ENCODE measurements at regions of chr3 and their contacts with region 1.

Region 1: DNA sequence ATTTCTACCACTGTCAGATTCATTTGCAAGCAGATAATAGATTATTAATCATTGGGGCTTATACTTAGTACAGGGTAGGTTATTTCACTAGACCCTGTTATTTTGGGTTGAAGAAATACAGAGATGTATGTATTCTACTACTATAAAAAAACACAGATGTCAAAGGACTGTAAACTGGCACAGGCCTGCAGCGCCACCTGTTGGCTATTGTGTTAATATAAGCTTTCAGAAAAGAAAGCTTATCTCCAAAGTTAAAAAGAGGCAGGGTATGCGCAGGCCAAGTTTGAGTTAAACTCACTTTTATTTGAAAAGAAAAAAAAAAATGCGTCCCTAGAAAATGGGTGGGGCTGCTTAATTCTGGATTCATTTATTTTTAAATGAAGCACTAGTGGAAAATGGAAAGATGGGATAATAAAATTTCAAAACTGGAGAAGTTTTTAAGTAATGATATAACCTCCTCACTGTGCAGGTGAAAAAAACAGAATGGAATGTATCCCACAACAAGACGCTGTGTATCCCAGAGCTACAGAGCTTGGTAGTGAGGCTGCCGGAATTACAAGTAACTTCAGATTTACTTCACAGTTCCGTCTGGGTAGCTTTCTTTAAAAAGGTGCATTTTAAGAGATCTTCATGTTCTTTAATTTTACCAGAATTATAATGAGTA is 407.2 kb upstream of the TGFBR2 start:
- DNase-seq: no peak
- H3K4me3 ChIP-seq: no peak overlapping the region
- H3K27ac ChIP-seq: no peak overlapping the region
- H3K27me3 ChIP-seq: no peaks in the 10 kb centered on the region
- CTCF ChIP-seq: peak; percentile 73

Region 2: GRCh38 chr3:30012941-30013543 is 186.2 kb before region 1 on chr3:
- CTCF ChIA-PET with region 1: interaction called, 26 read pairs
- POLR2A ChIA-PET with region 1: no interaction called
- DNase-seq: peak; percentile 24
- H3K4me3 ChIP-seq: no peak overlapping the region
- H3K27ac ChIP-seq: no peak overlapping the region
- H3K27me3 ChIP-seq: no peaks in the 10 kb centered on the region
- CTCF ChIP-seq: peak; percentile 72

Region 3: GRCh38 chr3:30112902-30113484 is 86.2 kb before region 1 on chr3:
- CTCF ChIA-PET with region 1: interaction called, 11 read pairs
- POLR2A ChIA-PET with region 1: no interaction called
- DNase-seq: peak; percentile 23
- H3K4me3 ChIP-seq: no peak overlapping the region
- H3K27ac ChIP-seq: no peak overlapping the region
- H3K27me3 ChIP-seq: no peaks in the 10 kb centered on the region
- CTCF ChIP-seq: peak; percentile 68

Region 4: DNA sequence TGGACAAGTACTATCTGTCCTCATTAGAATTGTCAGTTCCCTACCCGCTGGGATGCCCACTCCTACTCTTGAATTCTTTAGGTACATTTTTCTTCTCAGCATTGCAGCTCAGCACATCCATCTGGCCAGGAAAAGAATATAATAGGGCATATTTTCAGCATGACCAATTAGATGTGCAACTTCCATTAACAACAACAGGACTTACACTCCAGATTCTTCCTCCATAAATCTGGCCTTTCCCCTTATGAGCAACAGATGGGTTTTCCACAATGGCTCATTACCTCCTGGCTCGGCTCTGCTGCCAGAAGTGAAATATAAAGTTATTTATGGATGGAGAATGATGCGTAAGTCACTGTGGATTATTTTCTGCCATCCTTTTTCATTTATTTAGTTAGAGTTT is 36.6 kb before region 1 on chr3:
- CTCF ChIA-PET with region 1: interaction called, 12 read pairs
- POLR2A ChIA-PET with region 1: no interaction called
- DNase-seq: peak; percentile 54
- H3K4me3 ChIP-seq: no peak overlapping the region
- H3K27ac ChIP-seq: no peak overlapping the region
- H3K27me3 ChIP-seq: no peaks in the 10 kb centered on the region
- CTCF ChIP-seq: no peak

Region 5: GRCh38 chr3:30188713-30189112 is 10.5 kb before region 1 on chr3:
- CTCF ChIA-PET with region 1: interaction called, 24 read pairs
- POLR2A ChIA-PET with region 1: no interaction called
- DNase-seq: no peak
- H3K4me3 ChIP-seq: no peak overlapping the region
- H3K27ac ChIP-seq: no peak overlapping the region
- H3K27me3 ChIP-seq: no peaks in the 10 kb centered on the region
- CTCF ChIP-seq: no peak

Region 6: GRCh38 chr3:30496066-30496966 is 297.1 kb after region 1 on chr3:
- CTCF ChIA-PET with region 1: no interaction called
- POLR2A ChIA-PET with region 1: no interaction called
- DNase-seq: peak; percentile 55
- H3K4me3 ChIP-seq: no peak overlapping the region
- H3K27ac ChIP-seq: peak overlapping the region; percentile 78
- H3K27me3 ChIP-seq: no peaks in the 10 kb centered on the region
- CTCF ChIP-seq: no peak

Region 7: DNA sequence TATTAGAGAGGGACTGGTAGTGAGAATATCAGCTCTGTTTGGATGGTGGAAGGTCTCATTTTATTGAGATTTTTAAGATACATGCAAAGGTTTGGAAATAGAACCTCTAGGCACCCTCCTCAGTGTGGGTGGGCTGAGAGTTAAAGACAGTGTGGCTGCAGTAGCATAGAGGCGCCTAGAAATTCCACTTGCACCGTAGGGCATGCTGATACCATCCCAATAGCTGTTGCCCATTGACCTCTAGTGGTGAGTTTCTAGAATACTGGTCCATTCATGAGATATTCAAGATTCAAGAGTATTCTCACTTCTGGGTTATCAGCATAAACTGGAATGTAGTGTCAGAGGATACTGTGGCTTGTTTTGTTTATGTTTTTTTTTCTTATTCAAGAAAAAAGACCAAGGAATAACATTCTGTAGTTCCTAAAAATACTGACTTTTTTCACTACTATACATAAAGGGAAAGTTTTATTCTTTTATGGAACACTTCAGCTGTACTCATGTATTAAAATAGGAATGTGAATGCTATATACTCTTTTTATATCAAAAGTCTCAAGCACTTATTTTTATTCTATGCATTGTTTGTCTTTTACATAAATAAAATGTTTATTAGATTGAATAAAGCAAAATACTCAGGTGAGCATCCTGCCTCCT is 494.4 kb after region 1 on chr3:
- CTCF ChIA-PET with region 1: interaction called, 39 read pairs
- POLR2A ChIA-PET with region 1: no interaction called
- DNase-seq: peak; percentile 48
- H3K4me3 ChIP-seq: no peak overlapping the region
- H3K27ac ChIP-seq: no peak overlapping the region
- H3K27me3 ChIP-seq: no peaks in the 10 kb centered on the region
- CTCF ChIP-seq: peak; percentile 88